Activated naive CD4-positive, alpha-beta T cell treated with anti-CD3 and anti-CD28 coated beads for 36 hours (primary cell): ENCODE measurements at regions of chr3 and their contacts with region 1.

Region 1: GRCh38 chr3:38496131-38496910 is at the start of gene EXOG:
- DNase-seq: peak; percentile 97
- H3K4me3 Mint-ChIP-seq: peak within 1 kb of the TSS; percentile 92
- H3K27ac Mint-ChIP-seq: peak within 1 kb of the TSS; percentile 85
- H3K4me1 Mint-ChIP-seq: peaks cover 16% of the 10 kb centered on the region
- H3K27me3 Mint-ChIP-seq: no peaks in the 10 kb centered on the region
- total RNA-seq, gene EXOG: 15.9 to 17.3 TPM

Region 2: GRCh38 chr3:38346587-38347410 is 149.5 kb before region 1 on chr3 and contains the start of gene XYLB:
- CTCF ChIA-PET with region 1: interaction called, 10 read pairs
- intact Hi-C with region 1: loop called (anchors 5 kb)
- DNase-seq: peak; percentile 79
- H3K4me3 Mint-ChIP-seq: peak within 1 kb of the TSS; percentile 72
- H3K27ac Mint-ChIP-seq: no peak within 1 kb of the TSS
- H3K4me1 Mint-ChIP-seq: peaks cover 4% of the 10 kb centered on the region
- H3K27me3 Mint-ChIP-seq: peaks cover 2% of the 10 kb centered on the region
- total RNA-seq, gene XYLB: 2.5 to 2.8 TPM

Region 3: GRCh38 chr3:38521391-38521987 is 25.2 kb after region 1 on chr3:
- CTCF ChIA-PET with region 1: interaction called, 33 read pairs
- intact Hi-C with region 1: loop called (anchors 1 kb)
- DNase-seq: peak; percentile 83
- H3K4me3 Mint-ChIP-seq: no peak overlapping the region
- H3K27ac Mint-ChIP-seq: no peak overlapping the region
- H3K4me1 Mint-ChIP-seq: peaks cover 26% of the 10 kb centered on the region
- H3K27me3 Mint-ChIP-seq: no peaks in the 10 kb centered on the region

Region 4: DNA sequence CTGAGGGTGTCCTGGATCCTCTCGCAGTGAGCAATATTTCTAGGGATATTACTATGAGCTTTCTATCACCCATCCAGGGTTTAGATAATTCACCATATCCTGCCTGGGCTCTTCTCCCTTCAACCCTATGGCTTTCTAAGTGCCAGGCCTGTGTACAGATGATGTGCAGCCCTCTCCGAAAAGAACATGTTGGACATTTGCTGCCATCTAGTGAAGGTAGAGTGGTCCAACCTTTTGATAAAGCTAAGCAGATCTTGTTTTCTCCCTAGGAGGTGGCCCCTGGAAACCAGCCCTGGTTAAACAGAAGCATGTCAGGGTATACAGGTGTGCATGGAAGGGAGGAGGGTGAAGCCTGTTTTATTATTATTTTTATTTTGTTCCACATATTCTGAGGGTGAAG is 347.6 kb after region 1 on chr3:
- CTCF ChIA-PET with region 1: no interaction called
- intact Hi-C with region 1: loop called (anchors 2 kb)
- DNase-seq: peak; percentile 21
- H3K4me3 Mint-ChIP-seq: no peak overlapping the region
- H3K27ac Mint-ChIP-seq: no peak overlapping the region
- H3K4me1 Mint-ChIP-seq: no peaks in the 10 kb centered on the region
- H3K27me3 Mint-ChIP-seq: peaks cover 2% of the 10 kb centered on the region

Region 5: DNA sequence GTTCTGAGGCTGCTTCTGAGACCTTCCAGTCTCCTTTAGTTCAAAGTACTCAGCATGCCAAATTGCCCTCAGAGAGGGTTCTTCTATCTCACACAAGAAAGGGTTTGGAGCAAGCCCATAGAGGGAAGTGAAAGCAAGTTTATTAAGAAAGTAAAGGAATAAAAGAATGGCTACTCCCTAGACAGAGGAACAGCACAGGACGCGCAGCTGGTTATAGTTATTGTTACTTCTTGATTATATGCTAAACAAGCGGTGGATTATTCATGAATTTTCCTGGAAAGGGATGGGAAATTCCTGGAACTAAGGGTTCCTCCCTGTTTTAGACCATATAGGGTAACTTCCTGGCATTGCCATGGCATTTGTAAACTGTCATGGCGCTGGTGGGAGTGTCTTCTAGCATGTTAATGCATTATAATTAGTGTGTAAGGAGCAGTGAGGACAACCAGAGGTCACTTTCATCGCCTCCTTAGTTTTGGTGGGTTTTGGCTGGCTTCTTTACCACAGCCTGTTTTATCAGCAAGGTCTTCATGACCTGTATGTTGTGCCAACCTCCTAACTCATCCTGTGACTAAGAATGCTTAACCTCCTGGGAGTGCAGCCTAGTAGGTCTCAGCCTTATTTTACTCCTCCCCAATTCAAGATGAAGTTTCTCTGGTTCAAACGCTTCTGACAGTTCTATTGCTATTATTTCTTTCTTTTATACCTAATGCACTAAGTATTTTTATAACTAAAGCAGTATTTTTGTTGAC is 529.1 kb after region 1 on chr3:
- CTCF ChIA-PET with region 1: no interaction called
- intact Hi-C with region 1: loop called (anchors 2 kb)
- DNase-seq: no peak
- H3K4me3 Mint-ChIP-seq: no peak overlapping the region
- H3K27ac Mint-ChIP-seq: no peak overlapping the region
- H3K4me1 Mint-ChIP-seq: no peaks in the 10 kb centered on the region
- H3K27me3 Mint-ChIP-seq: peaks cover 2% of the 10 kb centered on the region